GM12878 (cell line): ENCODE measurements at regions of chr16 and their contacts with region 1.

Region 1: GRCh38 chr16:17612336-17612735 is 141.6 kb upstream of the XYLT1 start:
- DNase-seq: no peak
- ATAC-seq: no peak
- H3K4me3 ChIP-seq: no peak overlapping the region
- H3K27ac ChIP-seq: no peak overlapping the region
- H3K4me1 ChIP-seq: no peaks in the 10 kb centered on the region
- H3K27me3 ChIP-seq: no peaks in the 10 kb centered on the region; a peak in 1 of 4 replicates
- CTCF ChIP-seq: no peak
- EP300 ChIP-seq: no peak
- POLR2A ChIP-seq: no peak
- RAD21 ChIP-seq: no peak

Region 2: GRCh38 chr16:17556276-17557052 is 55.9 kb before region 1 on chr16:
- CTCF ChIA-PET with region 1: no interaction called
- POLR2A ChIA-PET with region 1: no interaction called
- RAD21 ChIA-PET with region 1: no interaction called
- SMC1A ChIA-PET with region 1: no interaction called
- in situ Hi-C with region 1: no loop called
- intact Hi-C with region 1: loop called (anchors 10 kb)
- DNase-seq: no peak
- ATAC-seq: peak; percentile 82
- H3K4me3 ChIP-seq: no peak overlapping the region
- H3K27ac ChIP-seq: no peak overlapping the region
- H3K4me1 ChIP-seq: peaks cover 7% of the 10 kb centered on the region; the same call in 1 of the 2 replicates
- H3K27me3 ChIP-seq: no peaks in the 10 kb centered on the region; a peak in 2 of 4 replicates
- CTCF ChIP-seq: peak; percentile 51 to 67 (median 62)
- EP300 ChIP-seq: no peak
- POLR2A ChIP-seq: no peak
- RAD21 ChIP-seq: peak; percentile 49

Region 3: GRCh38 chr16:17590719-17591654 is 21.3 kb before region 1 on chr16:
- CTCF ChIA-PET with region 1: no interaction called
- POLR2A ChIA-PET with region 1: no interaction called
- RAD21 ChIA-PET with region 1: no interaction called
- SMC1A ChIA-PET with region 1: no interaction called
- in situ Hi-C with region 1: no loop called
- intact Hi-C with region 1: no loop called
- DNase-seq: no peak
- ATAC-seq: no peak
- H3K4me3 ChIP-seq: no peak overlapping the region
- H3K27ac ChIP-seq: no peak overlapping the region
- H3K4me1 ChIP-seq: no peaks in the 10 kb centered on the region
- H3K27me3 ChIP-seq: no peaks in the 10 kb centered on the region; a peak in 1 of 4 replicates
- CTCF ChIP-seq: no peak
- EP300 ChIP-seq: no peak
- POLR2A ChIP-seq: no peak
- RAD21 ChIP-seq: no peak

Region 4: DNA sequence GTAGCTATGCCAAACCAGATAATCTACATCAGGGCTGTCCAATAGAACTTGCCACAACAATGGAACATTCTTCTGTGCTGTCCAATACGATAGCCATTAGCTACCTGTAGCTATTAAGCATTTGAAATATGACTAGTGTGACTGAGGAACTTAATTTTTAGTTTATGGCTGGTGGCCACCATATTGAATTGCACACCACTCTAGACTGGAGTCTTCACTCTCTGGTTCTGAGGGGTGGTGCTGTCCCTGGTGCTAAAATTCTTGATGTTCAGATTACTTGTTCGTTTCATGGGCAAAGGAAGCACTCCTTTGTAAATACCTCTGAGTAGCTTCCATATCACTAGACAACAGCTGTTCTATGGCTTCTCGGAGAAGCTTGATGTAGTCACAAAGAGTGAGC is 427.6 kb after region 1 on chr16:
- CTCF ChIA-PET with region 1: no interaction called
- POLR2A ChIA-PET with region 1: no interaction called
- RAD21 ChIA-PET with region 1: no interaction called
- SMC1A ChIA-PET with region 1: no interaction called
- in situ Hi-C with region 1: no loop called
- intact Hi-C with region 1: loop called (anchors 5 kb)
- DNase-seq: no peak
- ATAC-seq: no peak
- H3K4me3 ChIP-seq: no peak overlapping the region
- H3K27ac ChIP-seq: no peak overlapping the region
- H3K4me1 ChIP-seq: no peaks in the 10 kb centered on the region
- H3K27me3 ChIP-seq: no peaks in the 10 kb centered on the region
- CTCF ChIP-seq: no peak
- EP300 ChIP-seq: no peak
- POLR2A ChIP-seq: no peak
- RAD21 ChIP-seq: no peak